ENCODE measurements at regions of chr11 and their contacts with region 1.

Region 1: DNA sequence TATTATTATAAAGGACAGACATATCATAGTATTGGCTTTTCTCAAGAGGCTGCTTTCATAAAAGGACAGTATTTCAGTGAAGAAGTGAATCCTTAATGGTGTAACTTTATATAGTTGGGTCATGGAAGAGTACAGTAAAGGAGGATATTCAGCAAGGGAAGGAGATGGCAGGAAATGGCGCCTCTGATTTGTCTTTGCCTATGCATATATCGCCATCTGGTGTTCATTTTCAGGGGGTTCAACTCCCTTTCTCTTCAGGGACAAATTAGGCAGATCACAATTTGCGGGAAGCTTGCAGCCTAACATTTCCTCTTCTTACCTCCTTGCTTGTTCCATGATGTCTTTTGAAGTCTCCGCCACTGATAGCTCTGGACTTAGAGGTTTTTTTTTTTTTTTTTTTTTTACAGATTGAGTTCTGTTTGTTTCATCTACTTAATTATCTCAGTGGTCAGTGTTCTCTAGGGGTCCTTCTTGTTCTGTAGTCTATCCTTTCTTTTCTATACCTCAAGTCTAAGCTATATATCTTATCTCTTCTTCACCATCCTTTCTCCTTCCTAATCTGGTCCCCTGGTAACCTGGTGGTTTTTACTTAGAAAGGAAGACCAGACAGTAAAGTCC is 21.8 kb upstream of the RRM1 start:
- DNase-seq: no peak
- H3K4me3 ChIP-seq: no peak overlapping the region
- H3K27ac ChIP-seq: no peak overlapping the region
- H3K4me1 ChIP-seq: peaks cover 12% of the 10 kb centered on the region
- H3K27me3 ChIP-seq: no peaks in the 10 kb centered on the region
- CTCF ChIP-seq: peak; percentile 86

Region 2: GRCh38 chr11:3854977-3855807 is 217.6 kb before region 1 on chr11 and contains the start of gene STIM1:
- intact Hi-C with region 1: loop called (anchors 2 kb)
- DNase-seq: peak; percentile 95
- H3K4me3 ChIP-seq: peak within 1 kb of the TSS; percentile 92
- H3K27ac ChIP-seq: peak within 1 kb of the TSS; percentile 96
- H3K4me1 ChIP-seq: peaks cover 60% of the 10 kb centered on the region
- H3K27me3 ChIP-seq: peaks cover 21% of the 10 kb centered on the region
- CTCF ChIP-seq: peak; percentile 98
- total RNA-seq, gene STIM1: 32.0 TPM

Region 3: GRCh38 chr11:3920148-3920852 is 152.5 kb before region 1 on chr11:
- intact Hi-C with region 1: no loop called
- DNase-seq: no peak
- H3K4me3 ChIP-seq: no peak overlapping the region
- H3K27ac ChIP-seq: no peak overlapping the region
- H3K4me1 ChIP-seq: no peaks in the 10 kb centered on the region
- H3K27me3 ChIP-seq: no peaks in the 10 kb centered on the region
- CTCF ChIP-seq: no peak